MCF 10A (cell line): ENCODE measurements at regions of chr4 and their contacts with region 1.

Region 1: GRCh38 chr4:103099691-103100392 is at the start of gene BDH2:
- DNase-seq: peak; percentile 96
- H3K4me3 Mint-ChIP-seq: peak within 1 kb of the TSS; percentile 88
- H3K27ac Mint-ChIP-seq: peak within 1 kb of the TSS; percentile 90
- H3K4me1 Mint-ChIP-seq: peaks cover 16% of the 10 kb centered on the region
- H3K27me3 Mint-ChIP-seq: no peaks in the 10 kb centered on the region
- CTCF ChIP-seq: peak; percentile 59
- total RNA-seq, gene BDH2: 14.3 and 17.6 TPM in 2 replicates

Region 2: GRCh38 chr4:102430461-102430910 is 669.4 kb before region 1 on chr4:
- CTCF ChIA-PET with region 1: interaction called, 4 read pairs
- POLR2A ChIA-PET with region 1: interaction called, 12 read pairs
- intact Hi-C with region 1: no loop called
- DNase-seq: peak; percentile 35
- H3K4me3 Mint-ChIP-seq: peak overlapping the region; percentile 81
- H3K27ac Mint-ChIP-seq: peak overlapping the region; percentile 73
- H3K4me1 Mint-ChIP-seq: peaks cover 11% of the 10 kb centered on the region
- H3K27me3 Mint-ChIP-seq: no peaks in the 10 kb centered on the region
- CTCF ChIP-seq: no peak

Region 3: DNA sequence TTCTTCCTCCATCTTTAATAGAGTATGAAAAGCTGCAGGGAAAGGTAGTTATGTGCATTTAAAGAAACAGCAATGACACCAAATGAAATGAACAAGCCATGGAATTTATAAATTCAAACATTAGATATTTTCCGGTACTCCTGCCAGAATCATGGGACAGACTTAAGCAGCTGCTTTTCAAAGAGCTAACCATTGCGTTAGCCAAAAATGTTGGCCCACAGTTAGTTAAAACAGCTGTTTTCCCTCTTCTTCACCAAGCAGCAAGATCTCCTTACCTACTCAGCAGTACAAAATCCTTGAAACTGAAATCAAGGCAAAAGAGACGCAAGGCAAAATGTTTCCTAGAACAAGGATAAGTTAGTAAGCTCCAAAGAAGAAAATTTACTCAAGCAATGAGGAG is 403.1 kb before region 1 on chr4:
- CTCF ChIA-PET with region 1: no interaction called
- POLR2A ChIA-PET with region 1: no interaction called
- intact Hi-C with region 1: no loop called
- DNase-seq: no peak
- H3K4me3 Mint-ChIP-seq: no peak overlapping the region
- H3K27ac Mint-ChIP-seq: no peak overlapping the region
- H3K4me1 Mint-ChIP-seq: no peaks in the 10 kb centered on the region
- H3K27me3 Mint-ChIP-seq: no peaks in the 10 kb centered on the region
- CTCF ChIP-seq: no peak

Region 4: GRCh38 chr4:102918859-102919258 is 181.0 kb before region 1 on chr4:
- CTCF ChIA-PET with region 1: no interaction called
- POLR2A ChIA-PET with region 1: no interaction called
- intact Hi-C with region 1: no loop called
- DNase-seq: no peak
- H3K4me3 Mint-ChIP-seq: no peak overlapping the region
- H3K27ac Mint-ChIP-seq: no peak overlapping the region
- H3K4me1 Mint-ChIP-seq: no peaks in the 10 kb centered on the region
- H3K27me3 Mint-ChIP-seq: no peaks in the 10 kb centered on the region
- CTCF ChIP-seq: no peak

Region 5: DNA sequence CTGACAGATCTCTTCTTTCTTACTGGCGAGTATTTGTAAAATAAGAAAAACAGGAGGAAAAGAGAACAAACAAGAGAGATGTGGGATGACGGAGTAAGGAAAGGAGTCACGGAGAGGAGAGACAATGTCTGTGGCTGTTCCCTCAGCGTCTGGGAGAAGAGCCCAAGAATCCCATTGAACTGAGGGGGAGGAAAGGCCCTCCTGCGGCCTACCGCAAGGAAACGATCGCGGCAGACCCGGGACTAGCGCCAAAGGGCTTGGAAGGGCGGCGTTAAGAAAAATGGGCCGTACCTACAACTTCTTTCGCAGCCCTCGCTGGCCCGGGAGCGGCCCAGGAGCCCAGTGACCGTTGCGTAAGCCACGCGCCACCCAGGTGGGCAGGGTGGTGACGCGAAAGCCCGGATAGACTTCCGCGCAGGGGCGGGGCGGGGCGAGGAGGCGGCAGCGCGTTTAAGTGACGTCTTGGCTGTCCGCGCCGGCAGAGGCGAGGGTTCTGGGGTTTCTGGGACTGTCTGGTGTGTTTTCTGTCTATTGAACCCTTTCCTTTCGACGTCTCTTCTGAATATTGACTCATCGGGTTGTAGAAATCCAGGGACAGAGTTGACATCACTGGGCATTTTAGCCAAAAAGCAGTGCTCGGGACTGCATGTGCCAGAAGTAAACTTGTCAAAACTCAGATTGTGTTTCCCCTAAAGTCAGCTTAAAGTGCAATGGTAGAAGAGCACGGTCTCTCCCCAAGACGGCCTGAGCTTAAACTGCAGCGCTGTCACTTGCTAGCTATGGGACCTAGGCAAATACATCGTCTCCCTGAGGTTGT is 80.3 kb before region 1 on chr4 and contains the start of gene SLC9B1:
- CTCF ChIA-PET with region 1: interaction called, 3 read pairs
- POLR2A ChIA-PET with region 1: interaction called, 10 read pairs
- intact Hi-C with region 1: no loop called
- DNase-seq: peak; percentile 98
- H3K4me3 Mint-ChIP-seq: peak within 1 kb of the TSS; percentile 72
- H3K27ac Mint-ChIP-seq: peak within 1 kb of the TSS; percentile 97
- H3K4me1 Mint-ChIP-seq: no peaks in the 10 kb centered on the region
- H3K27me3 Mint-ChIP-seq: no peaks in the 10 kb centered on the region
- CTCF ChIP-seq: no peak
- total RNA-seq, gene SLC9B1: 0.77 and 0.86 TPM in 2 replicates

Region 6: GRCh38 chr4:103075901-103076739 is 23.7 kb before region 1 on chr4:
- CTCF ChIA-PET with region 1: interaction called, 5 read pairs
- POLR2A ChIA-PET with region 1: interaction called, 20 read pairs
- intact Hi-C with region 1: no loop called
- DNase-seq: peak; percentile 74
- H3K4me3 Mint-ChIP-seq: peak overlapping the region; percentile 93
- H3K27ac Mint-ChIP-seq: peak overlapping the region; percentile 92
- H3K4me1 Mint-ChIP-seq: peaks cover 20% of the 10 kb centered on the region
- H3K27me3 Mint-ChIP-seq: no peaks in the 10 kb centered on the region
- CTCF ChIP-seq: no peak